Adrenal gland (tissue), 19 donors: ENCODE measurements at regions of chr1 and their contacts with region 1.

Region 1: DNA sequence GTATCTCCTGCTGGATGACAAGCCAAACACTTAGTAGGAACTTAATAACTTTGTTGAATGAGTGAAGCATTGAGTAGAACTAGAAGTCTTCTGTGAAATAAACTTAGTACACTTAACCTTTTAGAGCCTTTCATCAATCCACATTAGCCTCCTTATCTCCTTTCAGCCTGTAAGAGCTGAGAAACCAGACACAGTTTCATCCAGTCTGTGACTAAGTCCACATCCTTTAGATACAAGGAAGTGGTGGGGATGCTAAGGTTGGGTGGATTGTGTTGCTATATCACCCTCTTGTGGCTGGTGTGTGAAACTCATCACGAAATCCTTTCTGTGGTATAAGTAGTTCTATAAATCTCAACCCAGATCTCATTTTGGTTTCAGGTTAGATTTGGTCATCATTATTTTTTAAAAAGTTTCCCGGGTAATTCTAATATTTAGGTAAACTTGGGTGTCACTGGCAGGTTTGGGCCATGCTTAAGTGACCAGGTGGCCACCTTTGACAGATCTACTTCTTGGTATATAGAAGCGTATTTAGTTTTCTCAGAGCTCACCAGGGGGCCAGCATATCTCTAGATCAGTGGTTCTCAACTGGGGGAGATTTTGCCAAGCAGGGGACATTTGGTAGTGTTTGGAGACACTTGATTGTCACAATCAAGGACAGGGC is 27.8 kb upstream of the CD84 start:
- DNase-seq: peak; percentile 27 to 70 (median 45)
- H3K4me3 ChIP-seq: no peak overlapping the region
- H3K27ac ChIP-seq: no peak overlapping the region
- H3K4me1 ChIP-seq: no peaks in the 10 kb centered on the region
- H3K27me3 ChIP-seq: peaks cover 3% of the 10 kb centered on the region
- CTCF ChIP-seq: peak; percentile 32 to 67 (median 62)
- POLR2A ChIP-seq: no peak

Region 2: GRCh38 chr1:160428655-160429054 is 178.5 kb before region 1 on chr1:
- intact Hi-C with region 1: loop called in 1 of 2 experiments (anchors 5 kb)
- DNase-seq: peak in 6 of 7 donors; percentile 32 to 67 (median 48)
- H3K4me3 ChIP-seq: no peak overlapping the region
- H3K27ac ChIP-seq: peak overlapping the region in 1 of 5 donors; percentile 34
- H3K4me1 ChIP-seq: peaks cover 0 to 5% of the 10 kb centered on the region in 2 donors
- H3K27me3 ChIP-seq: no peaks in the 10 kb centered on the region
- CTCF ChIP-seq: peak in 5 of 6 experiments; percentile 24 to 59 (median 51)
- POLR2A ChIP-seq: no peak